Mammary epithelial cell (primary cell): ENCODE measurements at regions of chr5 and their contacts with region 1.

Region 1: DNA sequence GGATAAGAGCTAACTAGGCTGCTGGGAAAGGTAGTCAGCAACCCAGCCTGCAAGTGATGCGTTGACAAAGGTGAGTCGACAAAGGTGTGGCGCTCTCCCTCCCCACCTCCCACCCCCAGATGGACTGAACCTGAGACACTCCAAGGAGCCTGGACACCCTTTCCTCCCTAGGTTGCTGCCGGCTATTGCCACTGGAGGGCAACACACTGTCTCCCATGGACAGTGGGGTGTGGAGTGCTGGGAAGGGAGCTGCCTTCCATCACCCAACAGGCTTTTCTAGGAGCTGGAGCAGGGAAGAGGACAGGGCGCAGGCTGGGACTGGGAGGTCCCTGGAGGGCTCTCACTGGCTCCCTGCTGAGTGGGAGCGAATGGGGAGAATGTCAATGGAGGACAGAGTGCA is 75.4 kb upstream of the ARAP3 start:
- DNase-seq: peak; percentile 62
- H3K4me3 ChIP-seq: no peak overlapping the region
- H3K27ac ChIP-seq: no peak overlapping the region
- H3K4me1 ChIP-seq: no peaks in the 10 kb centered on the region
- H3K27me3 ChIP-seq: peaks cover 24% of the 10 kb centered on the region
- CTCF ChIP-seq: peak; percentile 42 to 70

Region 2: GRCh38 chr5:141701360-141702119 is 55.9 kb before region 1 on chr5:
- CTCF ChIA-PET with region 1: no interaction called
- dilution Hi-C with region 1: no loop called
- in situ Hi-C with region 1: no loop called
- intact Hi-C with region 1: loop called (anchors 1 kb)
- DNase-seq: no peak
- H3K4me3 ChIP-seq: no peak overlapping the region
- H3K27ac ChIP-seq: no peak overlapping the region
- H3K4me1 ChIP-seq: peaks cover 9% of the 10 kb centered on the region
- H3K27me3 ChIP-seq: peaks cover 5% of the 10 kb centered on the region
- CTCF ChIP-seq: no peak

Region 3: GRCh38 chr5:141742866-141743851 is 14.2 kb before region 1 on chr5:
- CTCF ChIA-PET with region 1: no interaction called
- dilution Hi-C with region 1: no loop called
- in situ Hi-C with region 1: no loop called
- intact Hi-C with region 1: loop called (anchors 1 kb)
- DNase-seq: peak; percentile 22
- H3K4me3 ChIP-seq: no peak overlapping the region
- H3K27ac ChIP-seq: no peak overlapping the region
- H3K4me1 ChIP-seq: no peaks in the 10 kb centered on the region
- H3K27me3 ChIP-seq: no peaks in the 10 kb centered on the region
- CTCF ChIP-seq: no peak

Region 4: GRCh38 chr5:141825791-141826560 is 68.6 kb after region 1 on chr5:
- CTCF ChIA-PET with region 1: no interaction called
- dilution Hi-C with region 1: no loop called
- in situ Hi-C with region 1: no loop called
- intact Hi-C with region 1: loop called (anchors 1 kb)
- DNase-seq: no peak
- H3K4me3 ChIP-seq: no peak overlapping the region
- H3K27ac ChIP-seq: no peak overlapping the region
- H3K4me1 ChIP-seq: peaks cover 4% of the 10 kb centered on the region
- H3K27me3 ChIP-seq: no peaks in the 10 kb centered on the region
- CTCF ChIP-seq: peak; percentile 36 to 38

Region 5: GRCh38 chr5:141878711-141879425 is 121.5 kb after region 1 on chr5:
- CTCF ChIA-PET with region 1: interaction called, 15 read pairs
- dilution Hi-C with region 1: no loop called
- in situ Hi-C with region 1: no loop called
- intact Hi-C with region 1: loop called (anchors 1 kb)
- DNase-seq: peak; percentile 90
- H3K4me3 ChIP-seq: peak overlapping the region; percentile 50 to 58 (median 53)
- H3K27ac ChIP-seq: no peak overlapping the region
- H3K4me1 ChIP-seq: peaks cover 26% of the 10 kb centered on the region
- H3K27me3 ChIP-seq: peaks cover 11% of the 10 kb centered on the region
- CTCF ChIP-seq: peak; percentile 98 to 99

Region 6: DNA sequence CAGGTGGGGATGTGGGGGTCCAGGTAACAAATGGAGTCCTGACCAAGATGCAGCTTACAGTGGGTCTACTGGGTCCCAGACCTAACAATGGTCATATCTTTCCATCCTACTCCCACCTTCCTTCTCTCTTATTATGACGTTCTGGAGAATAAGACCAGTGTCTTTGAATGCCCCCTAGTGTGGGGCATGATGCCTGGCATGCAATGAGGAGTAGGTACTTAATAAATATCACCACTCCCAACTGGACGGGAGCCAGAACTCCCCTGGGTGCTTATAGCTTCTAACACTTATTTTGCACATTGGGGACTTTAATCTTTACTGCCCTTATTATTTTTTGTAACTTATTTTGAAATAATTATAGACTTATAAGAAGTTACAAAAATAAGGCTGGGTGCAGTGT is 449.4 kb after region 1 on chr5:
- CTCF ChIA-PET with region 1: no interaction called
- dilution Hi-C with region 1: no loop called
- in situ Hi-C with region 1: no loop called
- intact Hi-C with region 1: no loop called
- DNase-seq: no peak
- H3K4me3 ChIP-seq: no peak overlapping the region
- H3K27ac ChIP-seq: no peak overlapping the region
- H3K4me1 ChIP-seq: peaks cover 5% of the 10 kb centered on the region
- H3K27me3 ChIP-seq: no peaks in the 10 kb centered on the region
- CTCF ChIP-seq: peak; percentile 21 to 32